ENCODE measurements at regions of chr17 and their contacts with region 1.

Region 1: GRCh38 chr17:60142872-60143499 is 6.8 kb upstream of the CA4 start:
- DNase-seq: peak; percentile 94
- ATAC-seq: peak; percentile 68
- H3K4me3 Mint-ChIP-seq: peak overlapping the region; percentile 68
- H3K27ac Mint-ChIP-seq: peak overlapping the region; percentile 54; the same call in 1 of the 2 replicates
- H3K4me1 Mint-ChIP-seq: peaks cover 57% of the 10 kb centered on the region
- H3K27me3 Mint-ChIP-seq: peaks cover 84% of the 10 kb centered on the region
- CTCF ChIP-seq: peak; percentile 45; the same call in 1 of the 2 replicates

Region 2: DNA sequence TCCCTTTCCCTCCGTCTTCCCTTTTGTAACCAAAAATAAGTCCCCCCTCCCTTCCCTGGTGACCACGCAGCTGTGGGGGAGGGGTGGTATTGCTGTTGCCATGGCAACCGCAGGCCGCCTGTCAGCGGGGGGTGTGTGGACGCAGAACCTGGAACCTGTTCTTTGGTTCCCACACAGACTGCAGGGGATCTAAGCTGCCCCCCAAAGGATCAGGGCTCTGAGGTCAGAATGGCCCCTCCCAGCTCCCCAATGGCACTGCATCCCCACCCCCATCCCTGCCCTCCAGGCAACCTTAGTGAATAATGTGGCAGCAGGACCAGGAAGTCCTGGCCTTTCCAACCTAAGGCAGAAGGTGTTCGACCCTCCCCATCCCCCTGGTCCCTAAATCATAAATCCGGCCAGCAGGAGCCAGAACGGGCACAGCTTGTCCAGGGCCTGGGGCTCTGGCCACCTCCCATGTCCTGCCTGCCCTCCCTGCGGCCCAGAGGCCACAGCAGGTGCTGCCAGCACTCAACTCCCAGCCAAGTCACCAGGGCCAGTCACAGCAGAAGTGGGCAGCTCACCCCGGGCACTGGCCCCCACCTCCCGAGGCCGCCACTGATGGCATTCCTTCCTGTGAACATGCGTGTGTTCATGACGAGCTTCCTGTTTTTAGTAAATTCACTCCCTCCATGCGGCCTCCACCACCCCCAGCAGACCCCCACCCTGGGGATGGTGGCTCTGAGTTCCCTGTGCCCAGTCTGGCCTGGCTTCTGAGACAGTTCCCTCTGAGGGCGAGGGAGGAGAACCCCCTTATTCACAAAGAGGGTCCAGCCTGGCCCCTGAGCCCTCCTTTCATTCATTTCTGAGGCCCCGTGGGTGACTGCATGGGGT is 18.9 kb after region 1 on chr17:
- CTCF ChIA-PET with region 1: interaction called, 22 read pairs
- POLR2A ChIA-PET with region 1: interaction called, 3 read pairs
- DNase-seq: peak; percentile 67
- ATAC-seq: no peak
- H3K4me3 Mint-ChIP-seq: peak overlapping the region; percentile 47
- H3K27ac Mint-ChIP-seq: no peak overlapping the region
- H3K4me1 Mint-ChIP-seq: peaks cover 65% of the 10 kb centered on the region
- H3K27me3 Mint-ChIP-seq: no peaks in the 10 kb centered on the region
- CTCF ChIP-seq: no peak

Region 3: DNA sequence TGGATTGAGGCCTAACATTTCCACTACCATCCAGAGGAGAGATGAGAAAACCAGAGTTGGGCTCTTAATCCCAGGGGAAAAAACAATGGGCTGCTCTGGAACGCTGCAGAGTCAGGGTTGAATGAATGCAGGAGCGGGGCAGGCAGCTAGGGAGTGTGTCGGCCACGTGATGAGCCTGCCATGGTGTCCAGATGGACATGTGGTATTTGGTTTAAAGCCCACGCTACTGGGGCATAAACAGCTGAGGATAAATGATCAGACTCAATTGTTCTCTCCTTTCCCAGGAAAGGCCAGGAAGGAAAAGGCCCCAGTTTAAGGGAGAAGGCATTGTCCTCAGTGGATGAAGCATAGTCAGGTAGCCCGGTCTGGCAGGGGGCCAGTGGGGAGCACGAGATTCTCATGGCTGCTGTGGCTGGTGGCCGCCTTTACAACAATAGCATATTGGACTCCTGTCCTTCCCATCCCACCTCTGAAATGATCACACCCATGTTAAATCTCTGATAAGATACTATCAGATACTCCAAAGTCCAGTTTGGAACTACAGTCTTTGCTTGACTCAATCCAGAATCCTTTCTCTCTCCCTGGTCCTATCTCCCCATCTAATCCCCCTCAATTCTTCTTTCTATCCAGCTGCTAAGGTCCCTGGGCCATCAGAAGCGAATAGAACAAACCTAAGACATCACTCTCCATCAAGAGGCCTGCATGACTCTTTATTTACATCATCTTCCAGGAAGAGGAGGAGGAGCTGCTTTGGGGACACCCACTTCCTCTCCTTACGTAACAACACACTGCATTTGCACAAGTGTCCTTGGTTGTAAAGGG is 27.1 kb after region 1 on chr17:
- CTCF ChIA-PET with region 1: interaction called, 31 read pairs
- POLR2A ChIA-PET with region 1: no interaction called
- DNase-seq: no peak
- ATAC-seq: no peak
- H3K4me3 Mint-ChIP-seq: no peak overlapping the region
- H3K27ac Mint-ChIP-seq: no peak overlapping the region
- H3K4me1 Mint-ChIP-seq: peaks cover 20% of the 10 kb centered on the region
- H3K27me3 Mint-ChIP-seq: no peaks in the 10 kb centered on the region
- CTCF ChIP-seq: no peak

Region 4: DNA sequence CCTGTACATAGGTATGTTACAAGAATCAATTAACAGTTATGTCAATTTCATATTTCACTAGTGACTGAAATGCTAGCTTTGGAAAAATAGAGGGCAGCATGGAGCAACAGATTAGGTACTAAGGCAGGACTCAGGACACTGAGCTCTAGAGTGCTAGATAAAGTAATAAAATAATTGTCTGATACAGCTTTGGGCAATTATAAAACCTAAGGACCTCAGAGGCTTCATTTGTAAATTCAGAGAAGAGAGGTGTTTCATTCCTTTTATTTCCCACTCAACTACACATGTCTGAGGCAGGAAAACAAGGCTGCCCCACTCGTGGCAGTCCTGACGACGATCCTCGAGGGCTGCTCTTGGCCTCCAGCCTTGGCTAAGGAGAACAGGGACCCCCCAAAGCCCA is 88.2 kb after region 1 on chr17:
- CTCF ChIA-PET with region 1: interaction called, 19 read pairs
- POLR2A ChIA-PET with region 1: no interaction called
- DNase-seq: no peak
- ATAC-seq: 0 out of 2 replicates have a peak, but pooled peaks have one; percentile 28
- H3K4me3 Mint-ChIP-seq: no peak overlapping the region
- H3K27ac Mint-ChIP-seq: peak overlapping the region; percentile 82
- H3K4me1 Mint-ChIP-seq: peaks cover 12% of the 10 kb centered on the region
- H3K27me3 Mint-ChIP-seq: no peaks in the 10 kb centered on the region
- CTCF ChIP-seq: no peak